Adrenal gland (tissue), 19 donors: ENCODE measurements at regions of chr22 and their contacts with region 1.

Region 1: DNA sequence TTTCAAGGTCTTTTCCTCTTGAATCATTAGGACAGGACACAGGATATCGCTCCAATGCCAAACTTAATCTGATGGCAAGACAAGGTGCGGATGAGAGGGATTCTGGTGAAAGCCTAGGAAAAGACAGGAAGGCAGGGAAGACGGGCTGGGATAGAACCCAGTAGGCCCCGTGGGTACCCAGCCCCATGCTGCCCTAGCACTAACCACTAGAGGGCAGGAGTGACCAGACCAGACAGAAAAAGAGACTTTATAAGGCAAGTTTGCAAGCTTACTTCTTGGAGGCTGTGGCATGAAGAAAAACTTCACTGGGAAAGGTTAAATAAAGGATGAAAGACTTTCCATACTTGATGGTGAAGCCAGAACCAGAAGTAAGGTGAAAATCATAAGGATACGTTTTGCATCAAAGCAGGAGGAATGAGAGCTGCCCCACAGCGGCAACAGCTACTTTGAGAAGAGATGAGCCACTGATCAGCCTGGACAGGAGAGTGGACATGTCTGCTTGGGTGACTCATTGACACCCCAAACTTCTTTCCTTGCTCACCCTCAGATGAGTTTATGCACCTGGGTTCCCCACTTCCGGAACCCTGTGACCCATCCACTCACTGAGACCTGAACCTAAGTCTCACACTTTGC is 39.8 kb downstream of the SYN3 start:
- DNase-seq: peak; percentile 58 to 81 (median 70)
- H3K4me3 ChIP-seq: no peak overlapping the region
- H3K27ac ChIP-seq: no peak overlapping the region
- H3K4me1 ChIP-seq: no peaks in the 10 kb centered on the region
- H3K27me3 ChIP-seq: no peaks in the 10 kb centered on the region
- CTCF ChIP-seq: peak; percentile 63 to 88 (median 80)
- POLR2A ChIP-seq: no peak

Region 2: DNA sequence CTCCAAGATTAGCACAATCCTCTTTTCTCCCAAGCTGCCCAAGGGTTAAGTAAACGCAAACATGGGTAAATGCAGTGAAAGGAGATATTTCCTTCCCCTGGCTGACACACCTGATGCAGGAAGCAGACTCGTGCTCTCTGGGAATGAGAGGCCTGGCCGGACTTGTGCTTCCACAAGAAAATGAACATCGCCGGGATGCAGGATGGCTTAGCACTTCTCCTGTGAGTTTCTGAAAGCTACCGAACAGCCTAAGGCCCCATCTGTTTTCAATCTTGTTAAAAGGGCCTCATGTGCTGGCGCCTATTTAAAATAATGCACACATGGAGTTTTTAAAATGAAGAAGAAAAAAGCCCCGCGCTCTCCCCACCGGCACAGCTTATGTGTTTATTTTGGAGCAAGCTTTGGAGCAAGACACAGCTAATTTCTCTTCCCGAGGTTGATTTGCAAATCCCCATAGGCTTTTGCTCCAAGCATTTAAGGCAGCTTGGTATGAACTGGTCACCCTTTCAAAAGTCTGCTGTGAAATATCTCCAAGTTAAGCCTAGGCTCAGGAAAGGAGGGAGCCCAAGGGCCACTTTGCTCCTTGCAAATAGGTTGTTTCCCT is 61.0 kb before region 1 on chr22:
- intact Hi-C with region 1: no loop called
- DNase-seq: no peak
- H3K4me3 ChIP-seq: no peak overlapping the region
- H3K27ac ChIP-seq: no peak overlapping the region
- H3K4me1 ChIP-seq: peaks cover 0 to 16% of the 10 kb centered on the region in 2 donors
- H3K27me3 ChIP-seq: no peaks in the 10 kb centered on the region
- CTCF ChIP-seq: no peak
- POLR2A ChIP-seq: no peak

Region 3: DNA sequence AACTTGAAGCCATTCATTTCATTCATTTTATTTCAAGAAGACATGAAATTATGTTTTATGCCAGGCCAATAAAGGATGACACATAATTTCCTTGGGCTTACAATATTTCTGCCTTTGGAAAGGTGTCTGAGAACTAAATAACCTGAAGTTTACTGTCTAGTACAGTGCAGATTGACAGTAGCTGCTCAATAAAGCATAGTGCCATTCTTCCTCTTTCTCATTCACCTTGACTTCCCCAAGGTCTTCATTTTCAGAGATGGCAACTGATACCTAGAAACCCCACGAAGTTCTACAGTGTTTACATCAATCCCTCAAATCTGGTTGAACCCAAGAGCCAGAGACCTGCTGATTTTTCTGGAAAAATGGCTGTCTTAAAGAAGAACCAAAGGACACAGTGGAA is 184.1 kb after region 1 on chr22:
- intact Hi-C with region 1: loop called in 1 of 2 experiments (anchors 5 kb)
- DNase-seq: no peak
- H3K4me3 ChIP-seq: no peak overlapping the region
- H3K27ac ChIP-seq: no peak overlapping the region
- H3K4me1 ChIP-seq: no peaks in the 10 kb centered on the region
- H3K27me3 ChIP-seq: peaks cover 14% of the 10 kb centered on the region
- CTCF ChIP-seq: no peak
- POLR2A ChIP-seq: no peak